CD8-positive, alpha-beta T cell (primary cell): ENCODE measurements at regions of chr6 and their contacts with region 1.

Region 1: DNA sequence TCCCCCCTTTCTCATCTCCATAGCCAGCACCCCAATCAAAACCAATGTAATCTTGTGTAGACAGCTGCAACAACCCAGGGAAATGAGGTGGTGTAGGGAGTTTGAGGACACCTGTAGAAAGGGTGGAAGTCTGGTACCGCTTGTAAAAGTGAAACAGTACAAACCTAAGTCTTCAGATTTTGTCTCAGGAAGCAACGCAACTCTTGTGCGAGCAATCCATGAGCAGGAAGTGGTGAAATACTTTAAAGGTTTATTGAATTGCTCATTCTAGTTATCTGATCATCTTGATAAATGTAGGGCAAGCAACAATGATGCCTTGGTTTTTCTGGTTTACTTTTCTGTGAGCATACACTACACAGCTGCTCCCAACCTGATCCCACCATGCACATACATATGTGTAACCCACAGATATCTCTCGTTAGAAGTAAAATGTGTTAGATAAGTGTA is 71.1 kb upstream of the THEMIS start:
- DNase-seq: peak; percentile 24 to 91 (median 53)
- ATAC-seq: peak; percentile 85
- H3K4me3 ChIP-seq: peak overlapping the region; percentile 35 to 55
- H3K4me3 Mint-ChIP-seq: peak overlapping the region; percentile 84
- H3K27ac ChIP-seq: peak overlapping the region; percentile 79 to 85
- H3K27ac Mint-ChIP-seq: peak overlapping the region; percentile 97
- H3K4me1 ChIP-seq: peaks cover 80% of the 10 kb centered on the region
- H3K4me1 Mint-ChIP-seq: peaks cover 83% of the 10 kb centered on the region
- H3K27me3 ChIP-seq: no peaks in the 10 kb centered on the region
- H3K27me3 Mint-ChIP-seq: no peaks in the 10 kb centered on the region
- CTCF ChIP-seq: no peak

Region 2: DNA sequence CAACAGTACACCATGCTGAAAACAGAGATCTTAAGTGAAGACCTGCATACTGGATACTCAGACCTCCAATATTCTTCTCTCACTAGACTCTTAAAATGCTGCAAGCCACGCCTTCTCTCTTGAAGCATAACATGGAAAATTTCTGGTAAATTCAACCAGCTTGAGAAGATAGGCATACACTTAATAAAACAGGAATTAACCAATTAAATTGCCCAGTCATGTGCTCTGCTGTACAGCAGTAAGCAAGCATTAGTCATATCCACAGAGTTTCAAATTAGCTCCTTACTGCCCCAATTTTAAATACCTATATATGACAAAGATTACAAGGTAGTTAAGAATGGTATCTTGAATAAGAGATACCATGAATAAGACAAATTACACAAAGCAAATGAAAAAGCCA is 341.2 kb before region 1 on chr6:
- CTCF ChIA-PET with region 1: no interaction called
- POLR2A ChIA-PET with region 1: no interaction called
- intact Hi-C with region 1: no loop called
- DNase-seq: no peak
- ATAC-seq: no peak
- H3K4me3 ChIP-seq: no peak overlapping the region
- H3K4me3 Mint-ChIP-seq: no peak overlapping the region
- H3K27ac ChIP-seq: no peak overlapping the region
- H3K27ac Mint-ChIP-seq: no peak overlapping the region
- H3K4me1 ChIP-seq: no peaks in the 10 kb centered on the region
- H3K4me1 Mint-ChIP-seq: no peaks in the 10 kb centered on the region
- H3K27me3 ChIP-seq: no peaks in the 10 kb centered on the region
- H3K27me3 Mint-ChIP-seq: no peaks in the 10 kb centered on the region
- CTCF ChIP-seq: no peak

Region 3: DNA sequence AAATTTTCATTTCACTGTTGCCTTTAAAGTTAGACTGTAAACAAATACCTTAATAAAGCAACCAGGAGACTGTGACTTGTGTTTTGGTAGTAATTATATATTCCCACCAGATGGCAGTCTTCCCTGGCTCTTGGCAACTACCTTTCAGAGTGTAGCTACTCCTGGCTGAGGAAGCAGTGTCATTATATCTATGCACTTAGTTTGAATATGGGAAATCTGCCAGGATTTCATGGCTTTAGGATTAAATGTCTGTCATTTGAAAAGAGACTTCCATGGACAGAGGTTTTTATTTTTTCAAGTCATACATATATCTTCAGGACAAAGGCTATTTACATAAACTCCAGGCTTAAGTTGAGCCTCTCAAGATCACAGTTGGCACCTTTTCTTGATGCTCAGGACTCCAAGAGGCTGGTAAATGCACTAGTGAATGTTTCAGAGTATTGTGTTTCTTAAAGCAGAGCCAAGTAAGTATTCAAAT is 234.9 kb before region 1 on chr6:
- CTCF ChIA-PET with region 1: no interaction called
- POLR2A ChIA-PET with region 1: no interaction called
- intact Hi-C with region 1: loop called (anchors 5 kb)
- DNase-seq: peak in 7 of 9 experiments; percentile 4 to 84 (median 41)
- ATAC-seq: peak; percentile 96
- H3K4me3 ChIP-seq: no peak overlapping the region
- H3K4me3 Mint-ChIP-seq: no peak overlapping the region
- H3K27ac ChIP-seq: peak overlapping the region in 1 of 2 experiments; percentile 21
- H3K27ac Mint-ChIP-seq: peak overlapping the region; percentile 69
- H3K4me1 ChIP-seq: peaks cover 31% of the 10 kb centered on the region
- H3K4me1 Mint-ChIP-seq: peaks cover 67% of the 10 kb centered on the region
- H3K27me3 ChIP-seq: no peaks in the 10 kb centered on the region
- H3K27me3 Mint-ChIP-seq: no peaks in the 10 kb centered on the region
- CTCF ChIP-seq: peak; percentile 84

Region 4: GRCh38 chr6:127900935-127901334 is 71.0 kb before region 1 on chr6 and contains the start of gene THEMIS:
- CTCF ChIA-PET with region 1: interaction called, 6 read pairs
- POLR2A ChIA-PET with region 1: interaction called, 11 read pairs
- intact Hi-C with region 1: loop called in 1 of 2 experiments (anchors 1 kb)
- DNase-seq: peak in 8 of 9 experiments; percentile 29 to 86 (median 64)
- ATAC-seq: peak; percentile 72
- H3K4me3 ChIP-seq: peak within 1 kb of the TSS; percentile 69 to 79
- H3K4me3 Mint-ChIP-seq: peak within 1 kb of the TSS; percentile 98
- H3K27ac ChIP-seq: peak within 1 kb of the TSS; percentile 55 to 77
- H3K27ac Mint-ChIP-seq: peak within 1 kb of the TSS; percentile 99
- H3K4me1 ChIP-seq: peaks cover 39% of the 10 kb centered on the region
- H3K4me1 Mint-ChIP-seq: peaks cover 61% of the 10 kb centered on the region
- H3K27me3 ChIP-seq: no peaks in the 10 kb centered on the region
- H3K27me3 Mint-ChIP-seq: no peaks in the 10 kb centered on the region
- CTCF ChIP-seq: no peak
- total RNA-seq, gene THEMIS: 26.3 to 29.3 TPM

Region 5: GRCh38 chr6:127918506-127919427 is 53.2 kb before region 1 on chr6:
- CTCF ChIA-PET with region 1: interaction called, 9 read pairs
- POLR2A ChIA-PET with region 1: interaction called, 4 read pairs
- intact Hi-C with region 1: loop called in 1 of 2 experiments (anchors 5 kb)
- DNase-seq: peak in 3 of 9 experiments; percentile 24 to 78 (median 61)
- ATAC-seq: peak; percentile 74
- H3K4me3 ChIP-seq: peak overlapping the region; percentile 57 to 62
- H3K4me3 Mint-ChIP-seq: peak overlapping the region; percentile 92
- H3K27ac ChIP-seq: peak overlapping the region; percentile 39 to 58
- H3K27ac Mint-ChIP-seq: peak overlapping the region; percentile 95
- H3K4me1 ChIP-seq: peaks cover 73% of the 10 kb centered on the region
- H3K4me1 Mint-ChIP-seq: peaks cover 80% of the 10 kb centered on the region
- H3K27me3 ChIP-seq: no peaks in the 10 kb centered on the region
- H3K27me3 Mint-ChIP-seq: no peaks in the 10 kb centered on the region
- CTCF ChIP-seq: no peak

Region 6: DNA sequence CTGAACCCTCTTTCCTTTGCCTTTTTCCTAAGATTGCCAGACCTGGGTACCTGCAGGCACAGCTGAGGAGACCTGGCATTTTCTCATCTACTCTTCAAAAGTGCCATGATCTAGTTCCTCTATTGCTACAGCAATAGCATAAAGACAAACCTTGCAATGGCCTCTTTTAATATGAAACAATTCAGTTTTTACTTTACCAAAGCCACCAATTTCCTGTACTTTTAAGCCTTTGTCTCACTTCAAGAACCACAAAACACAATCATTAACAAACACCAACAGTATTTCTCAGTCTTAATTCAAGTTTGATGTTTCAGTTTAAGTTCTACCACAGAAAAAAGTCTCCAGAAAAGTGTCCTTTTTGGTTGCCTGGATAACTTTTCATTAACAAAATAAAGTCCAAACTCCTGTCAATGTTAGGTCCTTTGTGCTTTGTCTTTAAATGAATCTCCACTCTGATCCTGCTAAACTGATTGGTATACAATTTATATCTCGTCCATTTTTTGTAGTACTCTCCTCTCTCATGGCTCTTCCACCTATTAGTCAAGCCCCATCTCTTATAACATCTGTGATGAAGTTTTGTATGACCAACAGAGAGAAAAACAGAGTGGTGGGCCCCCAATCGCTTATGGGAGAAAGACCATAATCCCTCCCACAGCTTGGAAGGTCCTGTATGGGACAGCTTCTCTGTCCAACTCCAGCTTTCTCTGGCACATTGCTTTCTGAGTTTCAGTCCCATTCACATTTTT is 20.6 kb before region 1 on chr6:
- CTCF ChIA-PET with region 1: interaction called, 3 read pairs
- POLR2A ChIA-PET with region 1: interaction called, 10 read pairs
- intact Hi-C with region 1: loop called (anchors 2 kb)
- DNase-seq: peak in 2 of 9 experiments; percentile 55 to 76
- ATAC-seq: peak; percentile 83
- H3K4me3 ChIP-seq: peak overlapping the region; percentile 14 to 25
- H3K4me3 Mint-ChIP-seq: peak overlapping the region; percentile 68
- H3K27ac ChIP-seq: peak overlapping the region; percentile 40 to 63
- H3K27ac Mint-ChIP-seq: peak overlapping the region; percentile 92
- H3K4me1 ChIP-seq: peaks cover 58% of the 10 kb centered on the region
- H3K4me1 Mint-ChIP-seq: peaks cover 75% of the 10 kb centered on the region
- H3K27me3 ChIP-seq: no peaks in the 10 kb centered on the region
- H3K27me3 Mint-ChIP-seq: no peaks in the 10 kb centered on the region
- CTCF ChIP-seq: no peak

Region 7: DNA sequence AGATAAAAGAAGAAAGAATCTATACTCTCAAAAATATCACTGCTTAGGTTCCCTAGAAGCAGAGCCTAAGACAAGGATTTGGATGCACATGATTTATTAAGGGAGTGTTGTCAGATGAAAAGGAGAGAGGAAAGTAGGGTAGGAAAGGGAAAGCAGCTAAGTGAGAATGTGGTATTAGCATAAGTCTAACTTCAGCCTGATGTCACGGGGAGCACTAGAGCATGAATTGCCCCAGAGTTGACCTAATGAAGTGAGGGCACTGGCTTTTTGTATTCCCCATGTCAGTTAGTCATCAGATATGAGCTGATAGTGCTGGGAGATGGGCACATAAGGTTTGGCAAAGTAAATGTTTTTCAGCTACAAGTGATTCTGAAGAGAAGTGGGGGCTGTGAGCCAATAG is 57.9 kb after region 1 on chr6:
- CTCF ChIA-PET with region 1: no interaction called
- POLR2A ChIA-PET with region 1: no interaction called
- intact Hi-C with region 1: loop called in 1 of 2 experiments (anchors 5 kb)
- DNase-seq: no peak
- ATAC-seq: no peak
- H3K4me3 ChIP-seq: no peak overlapping the region
- H3K4me3 Mint-ChIP-seq: no peak overlapping the region
- H3K27ac ChIP-seq: no peak overlapping the region
- H3K27ac Mint-ChIP-seq: no peak overlapping the region
- H3K4me1 ChIP-seq: peaks cover 43% of the 10 kb centered on the region
- H3K4me1 Mint-ChIP-seq: peaks cover 60% of the 10 kb centered on the region
- H3K27me3 ChIP-seq: no peaks in the 10 kb centered on the region
- H3K27me3 Mint-ChIP-seq: no peaks in the 10 kb centered on the region
- CTCF ChIP-seq: no peak

Region 8: GRCh38 chr6:128520436-128521281 is 548.7 kb after region 1 on chr6 and contains the start of gene PTPRK:
- CTCF ChIA-PET with region 1: no interaction called
- POLR2A ChIA-PET with region 1: no interaction called
- intact Hi-C with region 1: loop called in 1 of 2 experiments (anchors 1 kb)
- DNase-seq: peak; percentile 69 to 92 (median 89)
- ATAC-seq: peak; percentile 85
- H3K4me3 ChIP-seq: peak within 1 kb of the TSS; percentile 66 to 92
- H3K4me3 Mint-ChIP-seq: peak within 1 kb of the TSS; percentile 97
- H3K27ac ChIP-seq: peak within 1 kb of the TSS; percentile 17 to 61
- H3K27ac Mint-ChIP-seq: peak within 1 kb of the TSS; percentile 94
- H3K4me1 ChIP-seq: peaks cover 4% of the 10 kb centered on the region
- H3K4me1 Mint-ChIP-seq: peaks cover 19% of the 10 kb centered on the region
- H3K27me3 ChIP-seq: peaks cover 5 to 18% of the 10 kb centered on the region in 2 experiments
- H3K27me3 Mint-ChIP-seq: peaks cover 41% of the 10 kb centered on the region
- CTCF ChIP-seq: peak; percentile 44
- total RNA-seq, gene PTPRK: 17.2 to 18.6 TPM